ENCODE measurements at regions of chr1 and their contacts with region 1.

Region 1: DNA sequence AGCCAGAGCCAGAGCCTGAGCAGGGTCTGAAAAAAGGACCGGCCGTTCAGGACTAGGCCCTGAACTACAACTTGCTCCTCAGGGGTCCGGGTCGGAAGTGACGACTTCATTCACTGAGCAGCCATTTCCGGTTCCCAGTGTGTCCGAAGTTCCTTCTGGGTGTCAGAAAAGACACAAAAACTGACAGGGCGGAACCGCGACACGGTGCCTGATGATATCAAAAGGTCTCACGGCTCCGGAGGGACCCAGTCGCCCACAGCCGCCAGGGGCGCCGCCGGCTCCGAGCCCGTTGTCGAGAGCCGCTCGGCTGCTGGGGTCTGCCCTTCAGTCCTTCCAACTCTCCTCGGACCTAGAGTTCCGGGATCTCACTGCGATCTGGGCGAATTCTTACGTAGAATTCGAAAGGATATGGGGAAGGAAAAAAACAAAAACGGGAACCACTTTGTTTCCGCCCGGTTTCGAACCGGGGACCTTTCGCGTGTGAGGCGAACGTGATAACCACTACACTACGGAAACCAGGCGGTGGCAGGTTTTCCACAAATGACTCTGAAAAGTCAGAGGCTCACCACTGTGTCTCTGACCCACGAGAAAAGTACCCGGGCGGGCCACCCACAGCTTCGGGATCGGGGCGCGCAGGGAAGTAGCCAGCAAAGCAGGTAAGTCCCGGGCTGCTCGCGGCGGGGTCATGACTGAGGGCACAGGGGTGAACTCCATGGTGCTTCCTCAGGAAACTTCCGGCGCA is 31.8 kb upstream of the CFAP126 start:
- DNase-seq: peak; percentile 98
- H3K4me3 Mint-ChIP-seq: peak overlapping the region; percentile 93
- H3K27ac Mint-ChIP-seq: peak overlapping the region; percentile 100
- H3K4me1 Mint-ChIP-seq: peaks cover 28% of the 10 kb centered on the region
- H3K27me3 Mint-ChIP-seq: peaks cover 3% of the 10 kb centered on the region

Region 2: DNA sequence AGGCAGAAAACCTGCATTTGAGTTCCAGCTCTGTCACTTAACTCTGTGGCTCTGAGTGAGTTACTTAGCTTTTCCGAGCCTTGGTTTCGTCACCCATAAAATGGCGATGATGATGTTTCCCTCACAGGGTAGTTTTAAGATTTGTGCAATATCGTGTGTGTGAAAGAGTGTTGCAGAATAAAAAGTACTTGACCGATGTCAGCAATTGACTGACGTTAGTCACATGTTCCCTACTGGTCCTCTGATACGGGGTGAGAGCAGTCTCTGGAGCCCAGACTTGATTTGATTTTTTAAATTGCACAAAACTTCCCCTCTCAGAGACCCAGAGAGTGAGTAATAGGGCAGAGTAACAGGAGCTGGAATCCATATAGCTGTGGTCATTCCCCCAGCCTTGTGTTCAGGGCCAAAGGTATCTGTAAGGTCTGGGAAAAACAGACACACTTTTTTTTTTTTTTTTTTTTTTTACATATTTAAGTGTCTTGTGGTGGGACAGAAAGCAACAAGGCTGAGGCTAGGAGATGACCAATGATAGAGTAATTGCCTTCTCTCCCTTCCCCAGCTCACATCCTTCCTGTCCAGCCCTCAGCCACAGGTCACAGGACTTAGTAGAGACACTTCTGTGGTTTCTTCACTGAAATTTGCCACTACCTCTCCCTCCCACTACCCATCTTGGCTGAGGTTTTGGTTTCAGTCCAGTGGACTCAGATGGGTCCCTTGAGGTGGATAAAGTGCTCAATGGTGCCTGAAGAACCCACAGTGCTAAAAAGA is 182.3 kb before region 1 on chr1:
- intact Hi-C with region 1: no loop called
- DNase-seq: peak; percentile 60
- H3K4me3 Mint-ChIP-seq: no peak overlapping the region
- H3K27ac Mint-ChIP-seq: peak overlapping the region; percentile 64
- H3K4me1 Mint-ChIP-seq: peaks cover 39% of the 10 kb centered on the region
- H3K27me3 Mint-ChIP-seq: no peaks in the 10 kb centered on the region

Region 3: GRCh38 chr1:161427733-161428516 is 28.5 kb after region 1 on chr1:
- intact Hi-C with region 1: loop called (anchors 2 kb)
- DNase-seq: peak; percentile 78
- H3K4me3 Mint-ChIP-seq: peak overlapping the region; percentile 55
- H3K27ac Mint-ChIP-seq: peak overlapping the region; percentile 74
- H3K4me1 Mint-ChIP-seq: peaks cover 19% of the 10 kb centered on the region
- H3K27me3 Mint-ChIP-seq: peaks cover 47% of the 10 kb centered on the region

Measured in activated CD4-positive, alpha-beta T cell treated with anti-CD3 and anti-CD28 coated beads, Interleukin-2, amount 10 ng/mL, durations not matched to agents 24 days and 14 days (primary cell).